Lower lobe of right lung (tissue), 2 donors: ENCODE measurements at regions of chr1 and their contacts with region 1.

Region 1: DNA sequence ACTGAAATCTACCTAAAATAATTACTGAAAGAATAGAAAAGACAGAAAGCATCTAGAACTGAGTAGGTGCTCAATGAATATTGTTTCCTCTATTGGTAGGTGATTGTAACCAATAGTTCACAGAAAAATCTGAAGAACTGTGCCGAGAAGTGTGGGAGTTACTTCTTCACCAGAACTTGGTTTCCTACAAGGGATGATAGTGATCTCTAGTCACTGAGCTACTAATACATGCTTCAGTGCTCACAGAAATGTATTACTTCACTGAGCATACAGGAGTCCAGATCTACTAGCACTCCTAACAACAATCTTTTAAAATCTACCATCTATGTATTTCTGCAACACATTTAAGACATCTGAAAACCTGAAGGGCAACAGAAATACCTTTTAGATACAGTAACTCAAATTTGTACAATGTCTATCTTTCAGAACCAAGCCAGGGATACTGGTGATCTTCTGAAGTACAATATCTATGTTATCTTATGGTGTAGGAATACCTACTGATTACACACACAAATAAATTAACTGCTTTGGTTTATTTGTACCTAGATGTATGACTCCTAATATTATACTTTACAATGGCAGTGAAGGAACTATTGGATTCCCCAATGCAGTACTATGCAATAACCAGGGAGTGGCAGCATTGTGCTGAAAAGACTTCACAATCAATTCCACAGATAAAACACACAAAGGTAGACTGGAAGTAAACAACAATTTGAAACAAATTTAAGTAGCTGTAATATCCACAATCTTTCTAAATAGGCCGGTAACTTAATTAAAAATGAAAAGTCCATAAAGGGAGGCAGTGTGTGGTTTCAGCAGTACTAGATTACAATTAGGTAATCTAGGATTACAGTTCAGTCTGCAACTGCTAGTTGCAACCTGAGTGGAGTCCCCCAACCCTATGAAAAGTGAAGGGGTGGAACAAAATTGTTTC is 243.0 kb downstream of the SLC45A1 start:
- DNase-seq: no peak
- ATAC-seq: peak; percentile 81 to 87
- H3K4me3 ChIP-seq: no peak overlapping the region
- H3K27ac ChIP-seq: no peak overlapping the region
- H3K4me1 ChIP-seq: peaks cover 14% of the 10 kb centered on the region
- H3K27me3 ChIP-seq: no peaks in the 10 kb centered on the region
- CTCF ChIP-seq: peak; percentile 90

Region 2: GRCh38 chr1:8671306-8671917 is 110.5 kb after region 1 on chr1:
- intact Hi-C with region 1: loop called (anchors 10 kb)
- DNase-seq: no peak
- ATAC-seq: peak; percentile 62 to 68
- H3K4me3 ChIP-seq: no peak overlapping the region
- H3K27ac ChIP-seq: no peak overlapping the region
- H3K4me1 ChIP-seq: peaks cover 45% of the 10 kb centered on the region
- H3K27me3 ChIP-seq: no peaks in the 10 kb centered on the region
- CTCF ChIP-seq: peak; percentile 82